Caco-2 (cell line): ENCODE measurements at regions of chr12 and their contacts with region 1.

Region 1: DNA sequence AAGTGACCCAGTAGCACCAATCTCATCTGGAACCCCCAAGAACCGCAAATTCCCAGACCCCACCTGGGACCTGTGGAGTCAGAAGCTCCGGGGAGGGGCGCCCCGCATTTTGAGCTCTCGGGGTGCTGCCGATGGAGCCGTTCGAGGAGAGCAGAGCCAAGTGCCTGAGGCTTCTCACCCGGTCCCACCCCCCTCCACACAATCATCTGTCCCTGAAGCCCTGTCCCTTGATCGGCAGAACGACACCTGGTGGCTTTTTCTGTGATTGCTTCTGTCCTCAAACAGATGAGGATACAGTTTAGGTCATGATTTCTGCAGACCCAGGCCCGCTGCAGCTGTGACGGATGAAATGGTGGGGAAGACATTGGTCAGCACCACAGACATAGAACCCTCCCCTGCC is 74.7 kb downstream of the NOC4L start:
- DNase-seq: peak; percentile 61 to 67
- H3K4me3 ChIP-seq: no peak overlapping the region
- H3K4me3 Mint-ChIP-seq: no peak overlapping the region
- H3K27ac Mint-ChIP-seq: no peak overlapping the region
- H3K4me1 ChIP-seq: peaks cover 4% of the 10 kb centered on the region; the same call in 1 of the 2 replicates
- H3K4me1 Mint-ChIP-seq: peaks cover 5% of the 10 kb centered on the region
- H3K27me3 ChIP-seq: no peaks in the 10 kb centered on the region; the same call in 1 of the 2 replicates
- H3K27me3 Mint-ChIP-seq: peaks cover 23% of the 10 kb centered on the region
- CTCF ChIP-seq: peak; percentile 60 to 79

Region 2: DNA sequence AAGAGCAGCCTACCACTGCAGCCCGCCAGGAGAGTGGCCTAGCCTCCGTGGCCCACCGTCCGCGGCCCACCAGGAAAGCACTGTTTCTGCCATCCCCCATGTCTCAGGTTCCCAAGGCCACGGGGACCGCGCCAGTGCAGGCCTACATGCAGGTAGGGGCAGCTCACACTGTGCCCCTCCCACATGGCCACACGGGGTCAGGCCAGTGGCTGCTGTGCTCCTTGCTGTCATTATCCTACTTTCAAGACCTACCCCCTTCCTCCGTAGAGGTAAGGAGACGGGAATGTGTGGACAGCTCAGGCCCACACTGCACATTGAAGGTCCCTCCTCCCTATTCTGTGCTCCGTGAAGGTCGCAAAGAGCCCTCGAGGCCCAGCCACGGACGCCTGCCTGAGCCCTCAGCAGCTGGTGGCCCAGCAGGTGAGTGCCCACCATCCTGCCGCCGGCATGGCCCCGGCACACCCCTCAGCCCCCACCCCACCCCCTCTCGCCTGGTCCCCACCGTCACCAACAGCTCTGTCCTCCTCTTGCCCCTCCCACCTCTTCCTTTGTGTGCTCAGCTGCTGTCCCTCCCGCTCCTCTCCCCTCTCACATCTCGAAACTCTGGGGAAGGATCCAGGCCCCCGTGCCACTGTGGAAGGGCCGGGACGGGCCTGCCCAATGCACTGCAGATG is 84.8 kb before region 1 on chr12:
- CTCF ChIA-PET with region 1: no interaction called
- POLR2A ChIA-PET with region 1: no interaction called
- intact Hi-C with region 1: no loop called
- DNase-seq: peak; percentile 52 to 60
- H3K4me3 ChIP-seq: no peak overlapping the region
- H3K4me3 Mint-ChIP-seq: no peak overlapping the region
- H3K27ac Mint-ChIP-seq: no peak overlapping the region
- H3K4me1 ChIP-seq: no peaks in the 10 kb centered on the region
- H3K4me1 Mint-ChIP-seq: no peaks in the 10 kb centered on the region
- H3K27me3 ChIP-seq: no peaks in the 10 kb centered on the region
- H3K27me3 Mint-ChIP-seq: no peaks in the 10 kb centered on the region
- CTCF ChIP-seq: peak; percentile 27 to 41

Region 3: GRCh38 chr12:132153501-132154340 is 65.2 kb before region 1 on chr12:
- CTCF ChIA-PET with region 1: interaction called, 15 read pairs
- POLR2A ChIA-PET with region 1: no interaction called
- intact Hi-C with region 1: loop called (anchors 1 kb)
- DNase-seq: peak; percentile 56 to 67
- H3K4me3 ChIP-seq: no peak overlapping the region
- H3K4me3 Mint-ChIP-seq: no peak overlapping the region
- H3K27ac Mint-ChIP-seq: no peak overlapping the region
- H3K4me1 ChIP-seq: no peaks in the 10 kb centered on the region
- H3K4me1 Mint-ChIP-seq: no peaks in the 10 kb centered on the region
- H3K27me3 ChIP-seq: no peaks in the 10 kb centered on the region
- H3K27me3 Mint-ChIP-seq: no peaks in the 10 kb centered on the region
- CTCF ChIP-seq: peak; percentile 75 to 90

Region 4: GRCh38 chr12:132189378-132190011 is 29.4 kb before region 1 on chr12:
- CTCF ChIA-PET with region 1: interaction called, 5 read pairs
- POLR2A ChIA-PET with region 1: no interaction called
- intact Hi-C with region 1: loop called (anchors 1 kb)
- DNase-seq: peak; percentile 93 to 95
- H3K4me3 ChIP-seq: peak overlapping the region; percentile 55
- H3K4me3 Mint-ChIP-seq: peak overlapping the region; percentile 90
- H3K27ac Mint-ChIP-seq: peak overlapping the region; percentile 72
- H3K4me1 ChIP-seq: peaks cover 8% of the 10 kb centered on the region; the same call in 1 of the 2 replicates
- H3K4me1 Mint-ChIP-seq: peaks cover 7% of the 10 kb centered on the region
- H3K27me3 ChIP-seq: no peaks in the 10 kb centered on the region
- H3K27me3 Mint-ChIP-seq: peaks cover 8% of the 10 kb centered on the region
- CTCF ChIP-seq: no peak